BJ (cell line): ENCODE measurements at regions of chr1 and their contacts with region 1.

Region 1: GRCh38 chr1:56363007-56363770 is 216.2 kb downstream of the PLPP3 start:
- DNase-seq: no peak
- H3K4me3 ChIP-seq: no peak overlapping the region
- H3K27me3 ChIP-seq: no peaks in the 10 kb centered on the region
- CTCF ChIP-seq: no peak

Region 2: DNA sequence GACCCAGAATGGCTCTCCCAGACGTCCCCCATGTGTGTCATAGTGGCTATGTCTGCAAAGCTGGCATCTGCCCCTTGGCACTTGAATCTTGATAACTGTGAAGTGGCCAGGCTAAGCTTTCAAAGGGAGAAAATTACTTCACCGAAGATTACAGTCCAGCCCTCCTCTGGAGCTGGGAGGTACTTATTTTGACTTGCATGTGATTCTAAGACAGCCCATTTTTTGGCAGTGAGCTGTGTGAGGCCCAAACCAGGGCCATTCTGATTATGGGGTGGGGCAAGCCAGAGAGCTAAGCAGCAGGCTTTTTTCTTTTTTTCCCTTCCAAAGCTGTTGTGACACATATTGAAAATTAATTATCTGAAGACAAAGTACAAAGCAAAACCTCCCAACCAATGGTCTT is 644.8 kb after region 1 on chr1:
- CTCF ChIA-PET with region 1: no interaction called
- POLR2A ChIA-PET with region 1: interaction called, 15 read pairs
- DNase-seq: no peak
- H3K4me3 ChIP-seq: no peak overlapping the region
- H3K27me3 ChIP-seq: no peaks in the 10 kb centered on the region
- CTCF ChIP-seq: no peak